Cardiac septum (tissue), 1 donor: ENCODE measurements at regions of chr14 and their contacts with region 1.

Region 1: GRCh38 chr14:32469388-32470160 is 140.5 kb downstream of the AKAP6 start:
- DNase-seq: no peak

Region 2: GRCh38 chr14:31510222-31510621 is 959.4 kb before region 1 on chr14:
- intact Hi-C with region 1: loop called (anchors 10 kb)
- DNase-seq: no peak

Region 3: GRCh38 chr14:32494609-32495434 is 25.2 kb after region 1 on chr14:
- intact Hi-C with region 1: loop called (anchors 2 kb)
- DNase-seq: no peak

Region 4: DNA sequence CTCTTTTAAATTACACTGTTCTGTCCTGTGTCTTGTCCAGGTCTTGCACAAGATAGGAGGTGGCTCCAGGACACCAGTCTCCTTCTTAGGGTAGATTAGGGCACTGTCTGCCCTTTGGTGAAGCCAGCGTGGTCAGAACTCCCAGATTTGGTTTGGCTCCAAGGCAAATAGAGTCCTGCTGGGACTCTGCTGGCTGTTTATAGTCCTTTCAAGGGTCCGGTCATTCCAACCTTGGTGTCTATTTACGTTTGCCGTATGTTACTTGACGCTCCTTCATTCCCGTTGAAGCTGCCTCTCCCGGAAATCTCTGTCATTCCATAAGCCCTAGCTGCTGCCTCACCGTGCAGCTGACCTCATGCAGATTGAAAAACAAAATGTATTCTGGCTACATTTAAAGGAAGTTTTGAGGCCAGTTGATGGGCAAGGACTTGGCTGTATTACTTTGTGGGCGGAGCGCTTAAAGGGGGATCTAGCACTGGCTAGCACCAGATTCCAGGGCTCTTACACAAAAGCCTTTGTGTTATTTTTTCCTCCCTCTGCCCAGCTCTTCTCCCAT is 40.1 kb after region 1 on chr14:
- intact Hi-C with region 1: loop called (anchors 5 kb)
- DNase-seq: peak; percentile 76

Region 5: GRCh38 chr14:32559595-32559994 is 90.0 kb after region 1 on chr14:
- intact Hi-C with region 1: loop called (anchors 10 kb)
- DNase-seq: no peak